ENCODE measurements at regions of chr10 and their contacts with region 1.

Region 1: DNA sequence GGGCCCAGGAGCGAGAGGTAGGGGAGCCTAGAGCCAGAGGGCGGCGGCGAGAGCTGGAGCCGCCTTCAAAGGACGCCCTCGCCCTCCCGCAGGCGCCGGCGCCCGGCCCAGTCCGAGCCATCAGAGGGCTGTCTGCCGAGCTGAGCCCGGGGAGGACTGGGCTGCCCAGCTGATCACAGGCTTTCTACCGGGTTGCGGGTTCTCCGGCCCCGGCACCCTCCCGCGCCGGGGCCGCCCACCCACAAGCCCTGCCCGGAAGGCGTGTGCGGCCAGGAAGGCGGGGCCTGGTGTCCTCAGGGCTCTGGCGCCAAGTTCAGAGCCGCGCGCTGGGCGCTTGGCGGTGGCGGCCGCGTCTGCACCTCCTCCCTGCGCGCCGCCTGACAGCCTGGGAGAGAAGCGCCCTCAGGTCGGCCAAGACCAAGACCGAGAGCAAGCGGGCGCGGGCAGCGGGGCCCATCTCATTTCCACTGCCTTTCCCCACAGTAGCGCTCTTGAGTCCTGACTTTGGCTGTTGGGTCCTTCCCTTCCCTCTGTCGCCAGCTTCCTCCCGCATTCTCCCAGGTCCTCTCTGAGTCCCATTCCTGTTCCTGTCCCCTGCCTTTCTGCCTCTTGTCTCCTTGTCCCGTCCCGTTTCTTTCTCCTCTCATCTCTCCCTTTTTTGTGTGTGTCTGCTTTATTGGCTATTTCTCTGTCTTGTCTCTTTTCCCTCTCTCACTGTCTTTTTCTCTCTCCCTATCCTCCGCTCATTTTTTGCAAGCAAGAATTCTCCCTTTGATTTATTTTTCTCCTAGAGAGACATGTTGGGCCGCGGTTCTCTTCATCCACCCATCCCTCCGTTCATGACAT is 60.6 kb upstream of the MSMB start:
- DNase-seq: peak; percentile 76 to 82
- H3K4me3 ChIP-seq: peak overlapping the region; percentile 62
- H3K4me3 Mint-ChIP-seq: peak overlapping the region; percentile 72
- H3K27ac Mint-ChIP-seq: no peak overlapping the region
- H3K4me1 ChIP-seq: peaks cover 6% of the 10 kb centered on the region; the same call in 1 of the 2 replicates
- H3K4me1 Mint-ChIP-seq: peaks cover 19% of the 10 kb centered on the region
- H3K27me3 ChIP-seq: peaks cover 2% of the 10 kb centered on the region; the same call in 1 of the 2 replicates
- H3K27me3 Mint-ChIP-seq: peaks cover 5% of the 10 kb centered on the region
- CTCF ChIP-seq: peak in 1 of 2 experiments; percentile 9

Region 2: GRCh38 chr10:46050941-46051623 is 55.6 kb before region 1 on chr10:
- CTCF ChIA-PET with region 1: no interaction called
- POLR2A ChIA-PET with region 1: no interaction called
- intact Hi-C with region 1: loop called (anchors 10 kb)
- DNase-seq: no peak
- H3K4me3 ChIP-seq: no peak overlapping the region
- H3K4me3 Mint-ChIP-seq: no peak overlapping the region
- H3K27ac Mint-ChIP-seq: no peak overlapping the region
- H3K4me1 ChIP-seq: peaks cover 50% of the 10 kb centered on the region
- H3K4me1 Mint-ChIP-seq: peaks cover 43% of the 10 kb centered on the region
- H3K27me3 ChIP-seq: no peaks in the 10 kb centered on the region
- H3K27me3 Mint-ChIP-seq: no peaks in the 10 kb centered on the region
- CTCF ChIP-seq: no peak

Region 3: DNA sequence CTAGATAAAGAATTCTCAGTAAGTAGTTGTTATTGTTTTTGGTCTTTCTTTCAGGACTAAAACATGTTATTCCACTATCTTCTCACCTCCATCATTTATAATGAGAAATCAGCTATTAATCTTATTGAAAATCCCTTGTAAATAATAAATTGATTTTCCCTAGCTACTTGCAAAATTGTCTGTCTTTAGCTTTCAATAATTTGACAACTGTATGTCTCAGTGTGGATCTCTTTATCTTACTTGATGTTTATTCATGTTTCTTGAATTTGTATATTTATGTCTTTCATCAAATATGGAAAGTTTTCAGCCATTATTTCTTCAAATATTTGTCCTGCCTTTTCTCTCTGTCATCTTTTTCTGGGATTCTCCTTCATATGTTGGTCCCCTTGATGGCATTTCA is 63.1 kb after region 1 on chr10:
- CTCF ChIA-PET with region 1: no interaction called
- POLR2A ChIA-PET with region 1: no interaction called
- intact Hi-C with region 1: loop called (anchors 10 kb)
- DNase-seq: no peak
- H3K4me3 ChIP-seq: no peak overlapping the region
- H3K4me3 Mint-ChIP-seq: no peak overlapping the region
- H3K27ac Mint-ChIP-seq: no peak overlapping the region
- H3K4me1 ChIP-seq: no peaks in the 10 kb centered on the region
- H3K4me1 Mint-ChIP-seq: no peaks in the 10 kb centered on the region
- H3K27me3 ChIP-seq: no peaks in the 10 kb centered on the region
- H3K27me3 Mint-ChIP-seq: peaks cover 17% of the 10 kb centered on the region
- CTCF ChIP-seq: no peak

Region 4: GRCh38 chr10:46247808-46248569 is 141.4 kb after region 1 on chr10:
- CTCF ChIA-PET with region 1: no interaction called
- POLR2A ChIA-PET with region 1: no interaction called
- intact Hi-C with region 1: no loop called
- DNase-seq: peak in 1 of 2 experiments; percentile 44
- H3K4me3 ChIP-seq: no peak overlapping the region
- H3K4me3 Mint-ChIP-seq: no peak overlapping the region
- H3K27ac Mint-ChIP-seq: no peak overlapping the region
- H3K4me1 ChIP-seq: no peaks in the 10 kb centered on the region
- H3K4me1 Mint-ChIP-seq: no peaks in the 10 kb centered on the region
- H3K27me3 ChIP-seq: no peaks in the 10 kb centered on the region
- H3K27me3 Mint-ChIP-seq: peaks cover 5% of the 10 kb centered on the region
- CTCF ChIP-seq: no peak

Region 5: DNA sequence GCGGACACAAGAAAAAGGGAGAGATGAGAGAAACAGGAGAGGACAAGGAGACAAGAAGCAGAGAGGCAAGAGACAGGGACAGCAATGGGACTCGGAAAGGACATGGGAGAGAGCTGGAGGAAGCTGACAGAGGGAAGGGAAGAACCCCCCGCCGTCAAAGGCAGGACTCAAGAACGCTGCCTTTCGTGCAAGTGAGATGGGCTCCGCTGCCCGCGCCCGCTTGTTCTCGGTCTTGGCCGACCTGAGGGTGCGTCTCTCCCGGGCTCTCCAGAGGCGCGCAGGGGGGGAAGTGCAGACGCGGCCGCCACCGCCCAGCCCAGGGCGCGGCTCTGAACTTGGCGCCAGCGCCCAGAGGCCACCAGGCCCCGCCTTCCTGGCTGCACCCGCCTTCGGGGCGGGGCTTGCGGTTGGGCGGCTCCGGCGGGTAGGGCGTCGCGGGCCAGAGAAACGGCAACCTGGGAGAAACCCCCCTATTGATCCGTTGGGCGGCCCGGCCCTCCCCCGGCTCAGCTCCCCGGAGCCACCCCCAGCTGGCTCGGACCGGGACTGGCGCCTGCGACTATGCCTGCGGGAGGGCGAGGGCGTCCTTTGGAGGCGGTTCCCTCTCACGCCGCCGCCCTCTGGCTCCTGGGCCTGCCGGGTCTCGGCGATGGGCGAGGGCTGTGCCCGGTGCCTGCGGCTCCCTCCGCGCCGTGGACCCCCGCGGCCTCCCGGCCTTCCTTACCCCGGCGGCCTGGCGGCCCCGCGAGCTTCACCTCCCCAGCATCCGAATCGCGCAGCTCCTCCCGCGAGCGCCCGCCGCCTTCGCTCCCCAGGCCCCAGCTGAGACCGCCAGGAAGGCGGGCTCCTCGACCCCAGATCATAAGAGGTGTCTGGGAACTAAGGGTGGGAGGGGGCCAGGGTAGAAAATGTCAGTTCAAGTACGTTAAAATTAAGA is 177.9 kb after region 1 on chr10:
- CTCF ChIA-PET with region 1: interaction called, 8 read pairs
- POLR2A ChIA-PET with region 1: interaction called, 5 read pairs
- intact Hi-C with region 1: loop called (anchors 1 kb)
- DNase-seq: peak; percentile 72 to 88
- H3K4me3 ChIP-seq: peak overlapping the region; percentile 63
- H3K4me3 Mint-ChIP-seq: peak overlapping the region; percentile 81
- H3K27ac Mint-ChIP-seq: peak overlapping the region; percentile 16
- H3K4me1 ChIP-seq: 0 out of 2 replicates have a peak, but pooled peaks cover 3% of the 10 kb centered on the region
- H3K4me1 Mint-ChIP-seq: peaks cover 7% of the 10 kb centered on the region
- H3K27me3 ChIP-seq: peaks cover 2% of the 10 kb centered on the region
- H3K27me3 Mint-ChIP-seq: peaks cover 13% of the 10 kb centered on the region
- CTCF ChIP-seq: no peak